ENCODE measurements at regions of chr3 and their contacts with region 1.

Region 1: DNA sequence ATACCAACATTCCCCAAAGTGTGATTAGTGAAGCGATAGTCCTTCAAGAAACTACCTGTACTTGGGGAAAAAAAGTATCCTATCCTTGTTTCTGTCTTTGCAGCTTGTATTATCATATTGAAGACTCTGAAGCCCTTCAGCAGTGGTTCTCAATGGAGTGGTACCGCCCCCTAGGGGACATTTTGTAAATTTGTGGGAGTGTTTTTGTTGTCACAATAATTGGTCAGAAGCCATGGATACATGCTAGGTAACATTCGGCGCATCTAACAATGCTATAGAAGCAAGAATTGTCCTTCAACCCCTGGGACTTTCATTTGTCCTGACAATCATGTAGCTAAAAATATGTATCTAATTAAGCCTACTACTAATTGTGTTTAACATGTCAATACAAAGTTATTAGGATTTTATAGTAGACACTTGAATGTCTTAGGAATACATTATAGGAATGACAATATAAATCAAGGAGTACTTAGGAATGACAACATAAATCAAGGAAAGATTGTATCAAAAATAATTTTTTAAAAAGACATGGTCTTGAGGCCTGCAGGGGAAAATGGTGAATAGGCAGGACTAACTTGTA is 53.7 kb downstream of the NMD3 start:
- DNase-seq: peak; percentile 66
- H3K4me3 ChIP-seq: no peak overlapping the region
- H3K27ac ChIP-seq: no peak overlapping the region
- H3K4me1 ChIP-seq: no peaks in the 10 kb centered on the region
- CTCF ChIP-seq: peak; percentile 94

Region 2: DNA sequence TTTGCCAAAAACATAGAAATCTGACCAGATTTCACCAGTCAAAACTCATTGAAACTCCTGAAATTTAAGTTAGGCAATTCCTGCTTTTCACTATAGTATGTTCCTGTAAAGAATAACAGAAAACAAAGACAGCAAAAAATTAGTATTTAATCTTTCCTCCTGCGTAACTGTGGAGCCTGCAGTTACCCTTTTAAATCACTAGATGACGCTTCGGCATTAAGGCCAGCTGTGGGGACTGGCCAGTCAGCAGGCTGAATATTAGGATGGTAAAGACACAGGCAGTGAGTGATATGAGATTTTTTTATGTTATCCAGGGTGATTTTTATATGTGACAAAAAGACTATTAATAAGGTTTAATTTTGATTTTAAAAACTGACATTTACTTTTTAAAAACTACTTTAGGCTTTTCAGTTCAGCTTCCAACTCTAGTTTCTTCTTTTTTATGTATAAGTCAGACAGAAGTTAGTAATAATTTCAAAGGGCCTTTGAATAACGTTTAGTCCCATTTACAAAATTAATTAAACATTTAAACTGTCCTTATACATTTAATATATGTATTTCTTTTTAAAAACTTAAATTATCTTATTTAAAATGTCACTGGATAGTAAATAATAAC is 353.7 kb before region 1 on chr3:
- CTCF ChIA-PET with region 1: no interaction called
- POLR2A ChIA-PET with region 1: no interaction called
- intact Hi-C with region 1: loop called (anchors 2 kb)
- DNase-seq: peak; percentile 50
- H3K4me3 ChIP-seq: no peak overlapping the region
- H3K27ac ChIP-seq: no peak overlapping the region
- H3K4me1 ChIP-seq: no peaks in the 10 kb centered on the region
- CTCF ChIP-seq: peak; percentile 97

Region 3: GRCh38 chr3:160956806-160957205 is 318.0 kb before region 1 on chr3:
- CTCF ChIA-PET with region 1: no interaction called
- POLR2A ChIA-PET with region 1: no interaction called
- intact Hi-C with region 1: loop called (anchors 1 kb)
- DNase-seq: peak; percentile 42
- H3K4me3 ChIP-seq: no peak overlapping the region
- H3K27ac ChIP-seq: no peak overlapping the region
- H3K4me1 ChIP-seq: no peaks in the 10 kb centered on the region
- CTCF ChIP-seq: peak; percentile 75

Region 4: DNA sequence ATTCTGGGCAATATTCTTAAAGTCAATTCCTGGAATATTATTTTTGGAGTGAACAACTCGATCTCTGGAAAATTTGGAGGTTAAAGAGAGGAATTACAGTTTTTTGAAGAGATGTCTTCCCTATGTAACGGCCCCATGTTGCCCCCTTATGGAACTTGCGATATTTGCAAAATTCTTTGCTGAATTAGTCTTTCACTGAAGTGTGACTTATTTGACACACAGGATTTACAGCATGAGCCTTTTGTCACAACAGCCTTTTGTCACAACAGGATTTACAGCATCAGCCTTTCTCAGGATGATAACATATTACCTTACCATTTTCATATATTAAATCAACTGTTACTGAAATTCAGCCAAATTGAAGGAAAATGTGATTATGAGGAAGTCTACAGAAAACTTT is 134.3 kb after region 1 on chr3:
- CTCF ChIA-PET with region 1: no interaction called
- POLR2A ChIA-PET with region 1: no interaction called
- intact Hi-C with region 1: loop called (anchors 5 kb)
- DNase-seq: peak; percentile 21
- H3K4me3 ChIP-seq: no peak overlapping the region
- H3K27ac ChIP-seq: no peak overlapping the region
- H3K4me1 ChIP-seq: no peaks in the 10 kb centered on the region
- CTCF ChIP-seq: peak; percentile 76

Measured in OCI-LY7 (cell line).